ENCODE measurements at regions of chr4 and their contacts with region 1.

Region 1: DNA sequence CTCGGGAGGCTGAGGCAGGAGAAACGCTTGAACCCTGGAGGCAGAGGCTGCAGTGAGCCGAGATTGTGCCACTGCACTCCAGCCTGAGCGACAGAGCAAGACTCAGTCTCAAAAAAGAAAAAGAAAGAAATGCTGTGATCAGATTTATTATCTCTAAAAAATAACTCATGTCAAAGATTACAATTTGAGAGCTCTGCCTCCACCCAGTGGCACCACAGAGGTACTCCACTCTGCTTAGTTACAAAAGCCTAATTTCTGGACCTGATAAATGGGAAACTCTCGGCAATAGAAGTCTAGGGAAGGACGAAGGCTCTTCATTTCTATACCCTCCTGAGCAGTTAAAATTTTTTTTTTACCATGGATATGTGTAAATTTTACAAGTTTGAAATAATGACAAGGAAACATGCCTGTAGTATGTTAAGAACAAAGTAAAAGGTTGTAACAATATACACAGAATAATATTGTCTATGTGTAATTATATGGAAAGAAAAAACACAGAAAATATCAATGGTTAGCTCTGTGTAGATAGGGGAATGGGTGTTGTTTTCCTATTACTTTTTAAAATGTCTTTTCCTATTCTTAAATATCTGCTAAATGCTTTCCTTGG is 149.8 kb downstream of the STIM2 start:
- DNase-seq: peak; percentile 75
- ATAC-seq: peak; percentile 72
- H3K4me3 ChIP-seq: no peak overlapping the region
- H3K27ac ChIP-seq: peak overlapping the region; percentile 48; the same call in 1 of the 2 replicates
- H3K4me1 ChIP-seq: peaks cover 10% of the 10 kb centered on the region
- H3K27me3 ChIP-seq: no peaks in the 10 kb centered on the region
- CTCF ChIP-seq: peak; percentile 82
- POLR2A ChIP-seq: no peak
- RAD21 ChIP-seq: peak; percentile 87

Region 2: DNA sequence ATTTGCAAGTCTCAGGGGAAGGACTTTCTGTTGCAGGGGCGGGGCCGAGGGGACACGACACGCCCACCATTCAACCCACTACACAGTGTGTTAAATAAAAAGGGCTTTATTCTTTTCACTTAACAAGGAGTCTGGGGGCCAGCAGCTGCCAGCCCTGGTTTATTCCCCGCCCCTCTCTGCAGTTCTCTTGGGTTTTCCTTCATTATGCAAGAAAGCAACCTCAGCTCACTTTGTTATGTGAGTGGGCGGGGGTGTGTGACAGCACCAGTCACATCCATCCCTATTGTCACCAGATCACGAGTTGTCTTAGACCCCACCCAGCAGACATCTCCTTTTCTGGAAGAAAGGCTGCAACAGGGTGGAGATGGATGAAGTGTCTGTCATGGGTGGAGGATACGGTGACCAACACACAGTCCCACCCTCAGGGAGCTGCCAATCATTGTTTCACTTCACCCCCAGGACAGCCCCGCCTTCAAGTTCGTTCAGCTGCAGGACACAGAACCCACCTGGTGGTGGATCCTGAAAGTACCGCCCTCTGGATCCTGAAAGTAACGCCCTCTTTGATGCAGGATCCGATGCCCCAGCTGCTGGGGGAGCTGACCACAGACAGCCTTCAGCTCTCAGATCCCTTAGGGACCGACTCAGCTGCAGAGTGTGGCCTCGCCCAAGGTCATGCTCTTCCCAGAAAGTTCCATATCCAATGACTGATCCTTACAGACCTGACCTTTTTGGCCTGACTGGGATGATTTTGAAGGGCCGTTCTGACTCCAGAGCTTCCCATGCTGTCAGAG is 1016.8 kb before region 1 on chr4:
- CTCF ChIA-PET with region 1: no interaction called
- POLR2A ChIA-PET with region 1: no interaction called
- dilution Hi-C with region 1: no loop called
- in situ Hi-C with region 1: loop called (anchors 25 kb)
- intact Hi-C with region 1: no loop called
- DNase-seq: no peak
- ATAC-seq: no peak
- H3K4me3 ChIP-seq: no peak overlapping the region
- H3K27ac ChIP-seq: no peak overlapping the region
- H3K4me1 ChIP-seq: 0 out of 2 replicates have a peak, but pooled peaks cover 2% of the 10 kb centered on the region
- H3K27me3 ChIP-seq: no peaks in the 10 kb centered on the region
- CTCF ChIP-seq: 0 out of 2 replicates have a peak, but pooled peaks have one; percentile 8
- POLR2A ChIP-seq: no peak
- RAD21 ChIP-seq: no peak

Region 3: GRCh38 chr4:26330186-26330787 is 680.1 kb before region 1 on chr4:
- CTCF ChIA-PET with region 1: interaction called, 3 read pairs
- POLR2A ChIA-PET with region 1: interaction called, 9 read pairs
- dilution Hi-C with region 1: no loop called
- in situ Hi-C with region 1: loop called (anchors 25 kb)
- intact Hi-C with region 1: no loop called
- DNase-seq: peak; percentile 68
- ATAC-seq: no peak
- H3K4me3 ChIP-seq: no peak overlapping the region
- H3K27ac ChIP-seq: no peak overlapping the region
- H3K4me1 ChIP-seq: peaks cover 13% of the 10 kb centered on the region
- H3K27me3 ChIP-seq: no peaks in the 10 kb centered on the region
- CTCF ChIP-seq: peak; percentile 61
- POLR2A ChIP-seq: no peak
- RAD21 ChIP-seq: peak; percentile 67

Region 4: DNA sequence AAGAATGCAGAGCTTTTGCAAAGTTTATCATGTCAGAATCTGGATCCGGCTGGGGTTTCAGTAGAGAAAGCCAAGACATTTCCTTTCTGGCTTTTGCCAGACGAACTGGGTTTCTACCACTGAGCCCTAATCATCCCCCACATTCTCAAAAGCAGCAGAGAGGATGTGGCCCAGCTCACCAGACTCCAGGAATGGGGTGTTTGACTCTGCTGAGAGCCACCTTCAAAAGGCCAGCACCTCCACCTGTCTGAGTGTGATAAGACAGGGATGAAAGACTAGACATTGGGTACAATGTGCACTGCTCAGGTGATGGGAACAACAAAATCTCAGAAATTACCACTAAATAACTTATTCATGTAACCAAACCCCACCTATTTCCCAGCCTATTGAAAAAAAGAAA is 494.5 kb before region 1 on chr4:
- CTCF ChIA-PET with region 1: no interaction called
- POLR2A ChIA-PET with region 1: no interaction called
- dilution Hi-C with region 1: no loop called
- in situ Hi-C with region 1: no loop called
- intact Hi-C with region 1: loop called (anchors 5 kb)
- DNase-seq: no peak
- ATAC-seq: no peak
- H3K4me3 ChIP-seq: no peak overlapping the region
- H3K27ac ChIP-seq: no peak overlapping the region
- H3K4me1 ChIP-seq: peaks cover 10% of the 10 kb centered on the region
- H3K27me3 ChIP-seq: no peaks in the 10 kb centered on the region
- CTCF ChIP-seq: no peak
- POLR2A ChIP-seq: no peak
- RAD21 ChIP-seq: no peak

Region 5: DNA sequence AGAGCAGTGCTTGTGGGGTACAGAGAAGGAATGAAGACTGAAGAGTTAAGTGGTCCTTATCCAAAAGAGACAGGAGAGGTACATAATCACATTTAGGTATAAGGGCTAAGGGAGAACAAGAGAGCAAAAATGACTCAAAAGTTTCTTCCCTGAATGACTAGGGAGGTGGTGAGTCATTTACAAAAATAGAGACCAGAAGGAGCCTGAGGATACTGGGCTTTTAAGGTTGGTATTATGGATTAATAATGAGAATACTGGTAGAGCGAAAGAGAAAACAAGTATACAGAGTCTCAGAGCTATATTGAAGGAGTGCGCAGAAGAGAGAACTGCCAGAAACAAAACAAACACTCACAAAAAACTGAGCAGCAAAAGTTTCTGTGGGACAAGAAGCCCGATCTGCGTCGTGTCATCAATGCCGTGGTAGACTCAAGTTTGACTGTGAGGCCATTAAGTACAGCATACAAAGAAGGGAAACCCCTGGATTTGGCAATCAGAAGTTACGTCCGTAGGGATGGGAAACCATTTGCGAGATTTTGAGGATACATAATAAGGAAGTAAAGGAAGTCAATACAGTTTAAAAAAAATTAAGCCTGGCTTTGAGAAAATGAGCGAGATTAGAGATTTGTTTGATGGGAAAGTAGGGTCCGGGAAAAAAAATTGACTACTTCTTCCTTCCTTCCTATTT is 278.9 kb before region 1 on chr4:
- CTCF ChIA-PET with region 1: interaction called, 5 read pairs
- POLR2A ChIA-PET with region 1: no interaction called
- dilution Hi-C with region 1: no loop called
- in situ Hi-C with region 1: loop called (anchors 25 kb)
- intact Hi-C with region 1: loop called (anchors 5 kb)
- DNase-seq: peak; percentile 41
- ATAC-seq: peak; percentile 32; the same call in 1 of the 2 replicates
- H3K4me3 ChIP-seq: no peak overlapping the region
- H3K27ac ChIP-seq: no peak overlapping the region
- H3K4me1 ChIP-seq: peaks cover 3% of the 10 kb centered on the region; the same call in 1 of the 2 replicates
- H3K27me3 ChIP-seq: no peaks in the 10 kb centered on the region
- CTCF ChIP-seq: no peak
- POLR2A ChIP-seq: no peak
- RAD21 ChIP-seq: no peak

Region 6: GRCh38 chr4:26873391-26874026 is 136.9 kb before region 1 on chr4:
- CTCF ChIA-PET with region 1: interaction called, 4 read pairs
- POLR2A ChIA-PET with region 1: no interaction called
- dilution Hi-C with region 1: no loop called
- in situ Hi-C with region 1: loop called (anchors 5 kb)
- intact Hi-C with region 1: no loop called
- DNase-seq: no peak
- ATAC-seq: no peak
- H3K4me3 ChIP-seq: no peak overlapping the region
- H3K27ac ChIP-seq: no peak overlapping the region
- H3K4me1 ChIP-seq: no peaks in the 10 kb centered on the region; the same call in 1 of the 2 replicates
- H3K27me3 ChIP-seq: no peaks in the 10 kb centered on the region
- CTCF ChIP-seq: no peak
- POLR2A ChIP-seq: no peak
- RAD21 ChIP-seq: no peak

Region 7: DNA sequence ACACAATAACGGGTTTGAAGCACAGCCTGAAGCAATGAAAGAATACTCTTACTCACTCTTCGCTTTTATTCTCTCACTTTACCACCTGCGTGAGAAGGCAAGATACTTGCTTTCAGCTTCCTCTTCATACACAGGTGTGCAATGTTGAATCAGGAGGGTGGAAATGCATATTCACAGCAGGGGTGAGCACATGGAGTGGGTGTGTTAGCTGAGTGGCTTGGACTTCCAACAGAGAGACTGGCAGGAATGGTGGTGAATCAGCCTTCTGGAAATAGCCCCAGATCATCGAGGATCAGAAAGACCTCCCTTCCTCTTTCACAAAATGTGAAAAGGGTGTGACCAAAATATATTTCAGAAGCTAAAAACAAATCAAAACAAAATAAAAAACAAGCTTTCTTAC is 371.4 kb after region 1 on chr4:
- CTCF ChIA-PET with region 1: no interaction called
- POLR2A ChIA-PET with region 1: no interaction called
- dilution Hi-C with region 1: no loop called
- in situ Hi-C with region 1: no loop called
- intact Hi-C with region 1: no loop called
- DNase-seq: no peak
- ATAC-seq: no peak
- H3K4me3 ChIP-seq: no peak overlapping the region
- H3K27ac ChIP-seq: no peak overlapping the region
- H3K4me1 ChIP-seq: no peaks in the 10 kb centered on the region
- H3K27me3 ChIP-seq: no peaks in the 10 kb centered on the region
- CTCF ChIP-seq: no peak
- POLR2A ChIP-seq: no peak
- RAD21 ChIP-seq: no peak

Measured in IMR-90 (cell line).